ENCODE measurements at regions of chr3 and their contacts with region 1.

Region 1: GRCh38 chr3:71601811-71602210 is 18.3 kb upstream of the FOXP1 start:
- DNase-seq: no peak
- H3K4me3 ChIP-seq: no peak overlapping the region
- H3K27ac ChIP-seq: no peak overlapping the region
- H3K4me1 ChIP-seq: peaks cover 0 to 3% (median 0%) of the 10 kb centered on the region in 4 donors
- H3K27me3 ChIP-seq: no peaks in the 10 kb centered on the region
- CTCF ChIP-seq: no peak
- EP300 ChIP-seq: no peak
- POLR2A ChIP-seq: no peak

Region 2: DNA sequence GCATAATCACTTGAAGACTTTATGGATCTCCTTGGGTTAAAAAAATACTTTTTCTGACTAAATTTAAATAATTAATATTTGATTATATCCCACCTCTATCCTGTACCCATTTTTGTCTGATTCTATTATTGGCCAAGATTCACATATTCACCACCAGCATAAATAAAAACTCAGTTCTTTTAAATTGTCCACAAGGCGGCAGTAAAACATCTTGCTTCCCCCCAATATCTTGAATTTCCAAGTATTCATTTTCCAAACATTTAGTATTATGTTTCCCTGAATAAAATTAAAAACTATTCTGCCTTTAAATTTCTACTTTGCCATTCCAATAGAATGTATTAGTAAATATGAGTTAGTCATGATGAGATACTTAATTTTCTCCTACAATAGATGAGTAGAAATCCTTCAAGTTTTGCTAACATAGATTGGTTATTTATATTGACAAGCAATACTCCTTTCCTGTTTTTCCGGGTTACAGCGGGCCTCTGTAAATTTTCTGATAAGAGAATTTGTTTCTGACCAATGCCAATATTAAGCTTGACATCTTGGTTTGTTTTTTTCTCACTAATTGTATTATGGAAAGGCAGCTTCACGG is 1070.7 kb before region 1 on chr3:
- in situ Hi-C with region 1: loop called in 1 of 4 experiments (anchors 25 kb)
- intact Hi-C with region 1: no loop called
- DNase-seq: no peak
- H3K4me3 ChIP-seq: no peak overlapping the region
- H3K27ac ChIP-seq: no peak overlapping the region
- H3K4me1 ChIP-seq: no peaks in the 10 kb centered on the region
- H3K27me3 ChIP-seq: no peaks in the 10 kb centered on the region
- CTCF ChIP-seq: peak; percentile 33 to 50 (median 48)
- EP300 ChIP-seq: no peak
- POLR2A ChIP-seq: no peak

Region 3: GRCh38 chr3:71662568-71662967 is 60.8 kb after region 1 on chr3:
- in situ Hi-C with region 1: no loop called
- intact Hi-C with region 1: no loop called
- DNase-seq: no peak
- H3K4me3 ChIP-seq: no peak overlapping the region
- H3K27ac ChIP-seq: no peak overlapping the region
- H3K4me1 ChIP-seq: peaks cover 0 to 12% (median 0%) of the 10 kb centered on the region in 4 donors
- H3K27me3 ChIP-seq: no peaks in the 10 kb centered on the region
- CTCF ChIP-seq: no peak
- EP300 ChIP-seq: no peak
- POLR2A ChIP-seq: no peak